Activated T-helper 2 cell treated with anti-CD3 and anti-CD28 coated beads, Interferon-gamma antibody, Interleukin-2, Interleukin-4, amounts not matched to agents 10 μg/mL and 5 μg/mL and 100 μg/mL, durations not matched to agents 14 hours and 24 hours and 36 hours (primary cell): ENCODE measurements at regions of chr1 and their contacts with region 1.

Region 1: DNA sequence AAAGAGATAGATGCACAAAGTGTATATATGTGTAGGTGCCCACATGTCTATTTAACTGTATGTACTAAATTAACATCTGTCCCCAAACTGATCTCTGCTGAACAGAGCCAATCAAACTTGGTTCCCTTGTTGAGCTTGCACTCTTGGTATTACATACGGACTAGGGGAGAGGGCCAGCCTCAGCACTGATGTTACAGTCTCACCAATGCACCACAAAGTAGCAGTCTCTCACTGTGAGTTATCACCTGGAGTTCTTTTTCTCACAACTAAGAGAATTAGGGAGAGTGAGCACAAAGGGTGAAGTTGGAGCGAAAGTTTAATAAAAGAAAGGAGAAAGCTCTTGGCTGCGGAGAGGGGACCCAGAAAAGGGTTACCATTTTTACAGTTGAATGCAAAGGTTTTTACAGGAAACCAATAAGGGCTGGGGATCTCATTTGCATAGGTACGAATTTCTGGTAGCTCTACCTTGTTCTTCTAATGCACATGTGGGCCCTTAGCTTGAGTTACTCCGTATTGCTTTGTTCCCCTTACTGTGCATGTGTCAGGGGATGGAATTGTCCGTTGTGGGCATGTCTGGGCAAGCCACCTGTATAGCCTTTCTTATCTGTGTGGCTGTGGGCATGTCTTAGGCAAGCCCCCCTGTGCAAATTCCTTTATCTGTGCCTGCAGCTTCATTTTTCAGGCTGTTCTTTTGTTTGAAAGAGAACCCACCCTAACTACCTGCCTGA is 13.3 kb upstream of the CHI3L2 start:
- DNase-seq: no peak
- H3K4me3 Mint-ChIP-seq: peak overlapping the region; percentile 53
- H3K27ac Mint-ChIP-seq: peak overlapping the region; percentile 91
- H3K4me1 Mint-ChIP-seq: peaks cover 79% of the 10 kb centered on the region
- H3K27me3 Mint-ChIP-seq: no peaks in the 10 kb centered on the region

Region 2: DNA sequence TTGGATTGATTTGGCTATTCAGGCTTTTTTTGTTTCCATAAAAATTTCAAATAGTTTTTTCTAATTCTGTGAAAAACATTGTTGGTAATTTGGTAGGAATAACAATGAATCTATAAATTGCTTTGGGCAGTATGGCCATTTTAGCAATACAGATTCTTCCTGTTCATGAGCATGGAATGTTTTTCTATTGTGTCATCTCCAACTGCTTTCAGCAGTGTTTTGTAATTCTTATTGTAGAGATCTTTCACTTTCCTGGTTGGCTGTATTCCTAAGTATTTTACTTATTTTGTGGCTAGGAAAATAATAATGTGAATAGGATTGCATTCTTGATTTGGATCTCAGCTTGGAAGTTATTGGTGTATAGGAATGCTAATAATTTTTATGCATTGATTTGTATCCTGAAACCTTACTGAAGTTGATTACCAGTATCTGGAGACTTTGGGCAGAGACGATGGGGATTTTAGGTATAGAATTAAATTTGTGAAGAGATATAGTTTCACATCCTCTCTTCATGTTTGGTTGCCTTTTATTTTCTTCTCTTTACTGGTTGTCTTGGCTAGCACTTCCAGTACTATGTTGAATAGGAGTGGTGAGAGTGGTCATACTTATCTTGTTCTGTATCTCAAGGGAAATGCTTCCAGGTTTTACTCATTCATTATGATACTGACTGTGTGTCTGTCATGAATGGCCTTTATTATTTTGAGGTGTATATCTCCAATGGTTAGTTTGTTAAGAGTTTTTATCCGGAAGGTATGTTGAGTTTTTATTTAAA is 131.6 kb before region 1 on chr1:
- intact Hi-C with region 1: no loop called
- DNase-seq: no peak
- H3K4me3 Mint-ChIP-seq: no peak overlapping the region
- H3K27ac Mint-ChIP-seq: no peak overlapping the region
- H3K4me1 Mint-ChIP-seq: no peaks in the 10 kb centered on the region
- H3K27me3 Mint-ChIP-seq: peaks cover 24% of the 10 kb centered on the region

Region 3: GRCh38 chr1:111148376-111148881 is 65.8 kb before region 1 on chr1:
- intact Hi-C with region 1: no loop called
- DNase-seq: no peak
- H3K4me3 Mint-ChIP-seq: no peak overlapping the region
- H3K27ac Mint-ChIP-seq: no peak overlapping the region
- H3K4me1 Mint-ChIP-seq: peaks cover 50% of the 10 kb centered on the region
- H3K27me3 Mint-ChIP-seq: no peaks in the 10 kb centered on the region

Region 4: GRCh38 chr1:111203681-111204200 is 10.5 kb before region 1 on chr1:
- intact Hi-C with region 1: loop called (anchors 1 kb)
- DNase-seq: peak; percentile 83
- H3K4me3 Mint-ChIP-seq: peak overlapping the region; percentile 98
- H3K27ac Mint-ChIP-seq: peak overlapping the region; percentile 97
- H3K4me1 Mint-ChIP-seq: peaks cover 61% of the 10 kb centered on the region
- H3K27me3 Mint-ChIP-seq: no peaks in the 10 kb centered on the region